ENCODE measurements at regions of chr10 and their contacts with region 1.

Region 1: GRCh38 chr10:69486922-69487666 is 35.8 kb downstream of the TSPAN15 start:
- DNase-seq: no peak
- ATAC-seq: no peak
- H3K4me3 ChIP-seq: no peak overlapping the region
- H3K27ac ChIP-seq: no peak overlapping the region
- H3K4me1 ChIP-seq: no peaks in the 10 kb centered on the region
- H3K27me3 ChIP-seq: peaks cover 14 to 75% of the 10 kb centered on the region in 2 experiments
- CTCF ChIP-seq: no peak
- EP300 ChIP-seq: no peak
- POLR2A ChIP-seq: no peak
- RAD21 ChIP-seq: no peak

Region 2: DNA sequence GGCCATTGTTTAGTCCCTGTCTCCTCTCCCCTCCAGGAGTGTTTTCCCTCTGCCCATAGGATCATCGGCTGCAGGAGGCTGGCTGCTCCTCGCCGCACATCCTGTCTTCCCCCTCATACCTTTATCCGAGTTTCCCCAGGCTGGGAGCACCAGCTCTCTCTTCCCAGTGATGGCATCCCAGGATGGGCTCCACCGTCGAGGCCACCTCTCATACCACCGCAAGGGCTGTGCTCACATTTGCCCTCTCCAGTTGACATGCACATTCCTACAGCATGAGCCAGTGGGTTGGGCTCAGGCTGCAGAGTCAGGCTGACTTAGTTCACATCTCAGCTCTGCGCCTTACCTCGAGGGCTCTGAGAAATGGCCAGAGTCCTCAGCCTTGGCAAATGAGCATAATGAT is 254.8 kb before region 1 on chr10:
- CTCF ChIA-PET with region 1: no interaction called
- POLR2A ChIA-PET with region 1: no interaction called
- in situ Hi-C with region 1: loop called (anchors 5 kb)
- intact Hi-C with region 1: no loop called
- DNase-seq: no peak
- ATAC-seq: no peak
- H3K4me3 ChIP-seq: no peak overlapping the region
- H3K27ac ChIP-seq: no peak overlapping the region
- H3K4me1 ChIP-seq: peaks cover 8 to 14% of the 10 kb centered on the region in 2 experiments
- H3K27me3 ChIP-seq: no peaks in the 10 kb centered on the region
- CTCF ChIP-seq: no peak
- EP300 ChIP-seq: no peak
- POLR2A ChIP-seq: no peak
- RAD21 ChIP-seq: no peak

Region 3: DNA sequence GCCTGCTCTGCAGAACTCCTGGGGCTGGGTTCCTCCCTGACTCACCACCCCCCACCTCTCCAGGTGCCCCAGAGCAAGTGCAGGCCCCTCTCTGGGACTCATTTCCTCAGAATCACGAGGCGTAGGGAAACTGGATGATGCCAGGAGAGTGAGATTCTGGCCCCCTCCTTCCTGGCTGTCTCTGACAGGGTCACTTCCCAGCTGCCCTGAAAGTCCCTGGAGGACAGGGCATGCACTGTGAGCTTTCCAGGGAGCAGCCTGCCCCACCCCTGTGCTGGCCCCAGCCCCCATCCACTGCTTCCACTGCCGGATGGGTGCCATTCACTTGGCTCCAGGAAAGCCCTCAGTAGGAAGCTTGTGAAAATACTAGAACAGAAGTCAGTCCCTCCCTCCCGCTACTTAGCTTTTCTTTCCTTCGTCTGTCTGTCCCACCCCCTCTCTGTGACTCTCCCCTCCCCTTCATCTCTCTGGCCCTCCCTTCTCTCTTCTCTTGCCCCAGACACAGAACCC is 80.7 kb before region 1 on chr10:
- CTCF ChIA-PET with region 1: no interaction called
- POLR2A ChIA-PET with region 1: no interaction called
- in situ Hi-C with region 1: no loop called
- intact Hi-C with region 1: no loop called
- DNase-seq: no peak
- ATAC-seq: no peak
- H3K4me3 ChIP-seq: no peak overlapping the region
- H3K27ac ChIP-seq: no peak overlapping the region
- H3K4me1 ChIP-seq: peaks cover 22 to 25% of the 10 kb centered on the region in 2 experiments
- H3K27me3 ChIP-seq: no peaks in the 10 kb centered on the region
- CTCF ChIP-seq: no peak
- EP300 ChIP-seq: no peak
- POLR2A ChIP-seq: no peak
- RAD21 ChIP-seq: no peak

Region 4: GRCh38 chr10:69449841-69450240 is 37.3 kb before region 1 on chr10:
- CTCF ChIA-PET with region 1: no interaction called
- POLR2A ChIA-PET with region 1: interaction called, 3 read pairs
- in situ Hi-C with region 1: no loop called
- intact Hi-C with region 1: loop called (anchors 5 kb)
- DNase-seq: peak; percentile 54 to 70 (median 66)
- ATAC-seq: peak; percentile 86
- H3K4me3 ChIP-seq: no peak overlapping the region
- H3K27ac ChIP-seq: no peak overlapping the region
- H3K4me1 ChIP-seq: peaks cover 14 to 15% of the 10 kb centered on the region in 2 experiments
- H3K27me3 ChIP-seq: 0 out of 5 replicates have a peak, but pooled peaks cover 0 to 9% of the 10 kb centered on the region in 2 experiments
- CTCF ChIP-seq: peak; percentile 60 to 74 (median 69)
- EP300 ChIP-seq: no peak
- POLR2A ChIP-seq: no peak
- RAD21 ChIP-seq: peak in 1 of 2 experiments; percentile 35; a peak in 2 of 4 replicates

Region 5: DNA sequence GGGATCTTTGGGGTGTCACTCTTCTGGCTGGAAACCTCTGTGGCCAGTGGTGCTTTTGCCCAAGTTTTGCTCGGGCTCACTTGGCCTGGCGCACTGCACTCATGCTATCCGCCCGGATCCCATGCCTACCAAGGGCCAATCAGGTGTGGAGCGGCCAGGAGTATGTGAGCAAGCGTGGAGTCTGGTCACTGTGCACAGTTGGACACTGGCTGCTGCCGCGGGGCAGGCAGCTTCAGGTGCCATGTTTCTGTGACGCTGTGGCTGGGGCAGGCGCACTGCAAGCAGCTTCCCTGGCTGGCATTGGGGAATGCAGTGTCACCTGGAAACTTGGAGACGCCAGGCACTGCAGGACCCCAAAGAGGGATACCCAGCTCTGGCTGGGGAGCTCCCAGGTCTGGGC is 40.9 kb after region 1 on chr10:
- CTCF ChIA-PET with region 1: no interaction called
- POLR2A ChIA-PET with region 1: no interaction called
- in situ Hi-C with region 1: no loop called
- intact Hi-C with region 1: no loop called
- DNase-seq: no peak
- ATAC-seq: no peak
- H3K4me3 ChIP-seq: no peak overlapping the region
- H3K27ac ChIP-seq: no peak overlapping the region
- H3K4me1 ChIP-seq: no peaks in the 10 kb centered on the region
- H3K27me3 ChIP-seq: peaks cover 0 to 20% of the 10 kb centered on the region in 2 experiments; a peak in 2 of 5 replicates
- CTCF ChIP-seq: no peak
- EP300 ChIP-seq: no peak
- POLR2A ChIP-seq: no peak
- RAD21 ChIP-seq: no peak

Measured in K562 (cell line).